Colonic mucosa (tissue), 4 donors: ENCODE measurements at regions of chr7 and their contacts with region 1.

Region 1: GRCh38 chr7:51357821-51358220 is 41.2 kb upstream of the COBL start:
- DNase-seq: no peak
- H3K4me3 ChIP-seq: no peak overlapping the region
- H3K27ac ChIP-seq: no peak overlapping the region
- H3K4me1 ChIP-seq: no peaks in the 10 kb centered on the region
- H3K27me3 ChIP-seq: no peaks in the 10 kb centered on the region
- CTCF ChIP-seq: no peak

Region 2: GRCh38 chr7:51224811-51225612 is 132.8 kb before region 1 on chr7:
- intact Hi-C with region 1: loop called (anchors 5 kb)
- DNase-seq: peak; percentile 88
- H3K4me3 ChIP-seq: no peak overlapping the region
- H3K27ac ChIP-seq: no peak overlapping the region
- H3K4me1 ChIP-seq: no peaks in the 10 kb centered on the region
- H3K27me3 ChIP-seq: no peaks in the 10 kb centered on the region
- CTCF ChIP-seq: peak; percentile 53